BJ (cell line): ENCODE measurements at regions of chr2 and their contacts with region 1.

Region 1: GRCh38 chr2:127479219-127479825 is 47.0 kb downstream of the IWS1 start:
- DNase-seq: peak; percentile 23
- H3K4me3 ChIP-seq: no peak overlapping the region
- H3K27me3 ChIP-seq: no peaks in the 10 kb centered on the region
- CTCF ChIP-seq: peak; percentile 65

Region 2: GRCh38 chr2:127324635-127325034 is 154.7 kb before region 1 on chr2:
- CTCF ChIA-PET with region 1: interaction called, 51 read pairs
- POLR2A ChIA-PET with region 1: no interaction called
- DNase-seq: no peak
- H3K4me3 ChIP-seq: no peak overlapping the region
- H3K27me3 ChIP-seq: no peaks in the 10 kb centered on the region
- CTCF ChIP-seq: peak; percentile 67

Region 3: GRCh38 chr2:127330753-127331152 is 148.6 kb before region 1 on chr2:
- CTCF ChIA-PET with region 1: interaction called, 51 read pairs
- POLR2A ChIA-PET with region 1: no interaction called
- DNase-seq: no peak
- H3K4me3 ChIP-seq: no peak overlapping the region
- H3K27me3 ChIP-seq: no peaks in the 10 kb centered on the region
- CTCF ChIP-seq: no peak

Region 4: DNA sequence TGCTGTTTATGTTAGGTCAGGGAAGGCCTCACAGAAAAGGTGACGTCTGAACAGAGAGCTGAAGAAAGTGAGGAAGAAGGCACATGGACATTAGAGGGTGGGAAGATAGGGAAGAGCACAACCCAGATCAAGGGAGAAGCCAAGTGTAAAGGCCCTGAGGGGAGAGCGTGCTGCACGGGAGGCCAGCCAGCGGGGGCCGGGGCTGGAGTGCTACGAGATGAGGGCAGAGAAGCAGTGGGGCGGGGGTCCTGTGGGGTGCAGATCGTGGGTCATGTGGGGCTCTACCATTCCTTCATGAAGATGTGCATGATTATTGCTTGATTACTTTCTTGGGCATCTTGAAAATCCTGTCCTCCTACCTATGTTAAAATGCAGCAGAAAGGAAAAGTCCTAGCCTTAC is 10.3 kb before region 1 on chr2:
- CTCF ChIA-PET with region 1: interaction called, 20 read pairs
- POLR2A ChIA-PET with region 1: no interaction called
- DNase-seq: no peak
- H3K4me3 ChIP-seq: no peak overlapping the region
- H3K27me3 ChIP-seq: no peaks in the 10 kb centered on the region
- CTCF ChIP-seq: no peak